Dendritic cell treated with granulocyte-macrophage colony-stimulating factor and Interleukin-4, amounts not matched to agents 40 ng/mL and 50 ng/mL, for 4 days (primary cell): ENCODE measurements at regions of chr12 and their contacts with region 1.

Region 1: GRCh38 chr12:68686595-68687521 is at the start of gene NUP107:
- H3K4me3 Mint-ChIP-seq: peak within 1 kb of the TSS; percentile 87
- H3K27ac Mint-ChIP-seq: peak within 1 kb of the TSS; percentile 88
- H3K4me1 Mint-ChIP-seq: peaks cover 9% of the 10 kb centered on the region
- H3K27me3 Mint-ChIP-seq: no peaks in the 10 kb centered on the region

Region 2: DNA sequence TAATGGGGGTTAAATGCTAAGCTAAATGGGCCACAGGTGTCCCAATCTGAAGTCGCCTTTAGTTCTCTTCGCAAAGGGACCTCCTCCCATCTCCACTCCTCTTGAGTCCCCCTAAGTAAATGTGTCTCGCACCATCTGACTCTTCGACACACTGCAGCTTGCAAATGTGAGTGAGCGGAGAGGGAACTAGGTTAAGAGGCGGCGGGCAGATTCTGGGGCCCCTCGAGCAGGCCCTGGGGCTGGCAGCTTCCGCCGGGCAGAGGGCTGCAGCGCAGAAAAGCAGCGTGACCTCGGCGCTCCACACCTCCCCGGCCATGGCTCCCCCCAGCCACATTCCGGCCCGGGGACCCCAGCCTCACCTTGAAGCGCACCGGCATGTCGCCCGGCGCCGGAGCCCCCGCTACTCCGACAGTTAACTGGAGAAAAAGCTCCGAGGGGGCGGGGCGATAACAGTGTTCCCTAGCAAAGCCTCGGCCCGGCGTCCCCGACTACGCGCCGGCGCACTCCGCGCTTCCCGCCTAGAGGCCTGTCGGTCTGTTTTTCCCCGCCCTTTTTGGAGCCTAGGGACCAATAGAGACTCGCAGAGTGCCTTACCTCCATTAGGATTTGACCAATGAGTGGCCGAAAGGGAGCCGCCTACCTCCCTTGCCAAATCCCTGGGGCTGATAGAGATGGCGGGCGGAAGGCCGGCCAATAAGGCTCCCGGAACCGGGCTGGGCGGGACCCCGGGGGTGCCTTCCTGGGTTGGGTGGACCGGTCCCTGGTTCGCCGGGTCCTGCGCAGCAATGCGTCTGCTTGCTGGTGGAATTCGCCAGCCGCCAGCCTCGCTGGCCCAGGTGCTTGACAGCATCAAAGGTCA is 354.8 kb before region 1 on chr12 and contains the start of gene MDM1:
- intact Hi-C with region 1: loop called (anchors 2 kb)
- H3K4me3 Mint-ChIP-seq: peak within 1 kb of the TSS; percentile 85
- H3K27ac Mint-ChIP-seq: peak within 1 kb of the TSS; percentile 85
- H3K4me1 Mint-ChIP-seq: peaks cover 41% of the 10 kb centered on the region
- H3K27me3 Mint-ChIP-seq: no peaks in the 10 kb centered on the region

Region 3: DNA sequence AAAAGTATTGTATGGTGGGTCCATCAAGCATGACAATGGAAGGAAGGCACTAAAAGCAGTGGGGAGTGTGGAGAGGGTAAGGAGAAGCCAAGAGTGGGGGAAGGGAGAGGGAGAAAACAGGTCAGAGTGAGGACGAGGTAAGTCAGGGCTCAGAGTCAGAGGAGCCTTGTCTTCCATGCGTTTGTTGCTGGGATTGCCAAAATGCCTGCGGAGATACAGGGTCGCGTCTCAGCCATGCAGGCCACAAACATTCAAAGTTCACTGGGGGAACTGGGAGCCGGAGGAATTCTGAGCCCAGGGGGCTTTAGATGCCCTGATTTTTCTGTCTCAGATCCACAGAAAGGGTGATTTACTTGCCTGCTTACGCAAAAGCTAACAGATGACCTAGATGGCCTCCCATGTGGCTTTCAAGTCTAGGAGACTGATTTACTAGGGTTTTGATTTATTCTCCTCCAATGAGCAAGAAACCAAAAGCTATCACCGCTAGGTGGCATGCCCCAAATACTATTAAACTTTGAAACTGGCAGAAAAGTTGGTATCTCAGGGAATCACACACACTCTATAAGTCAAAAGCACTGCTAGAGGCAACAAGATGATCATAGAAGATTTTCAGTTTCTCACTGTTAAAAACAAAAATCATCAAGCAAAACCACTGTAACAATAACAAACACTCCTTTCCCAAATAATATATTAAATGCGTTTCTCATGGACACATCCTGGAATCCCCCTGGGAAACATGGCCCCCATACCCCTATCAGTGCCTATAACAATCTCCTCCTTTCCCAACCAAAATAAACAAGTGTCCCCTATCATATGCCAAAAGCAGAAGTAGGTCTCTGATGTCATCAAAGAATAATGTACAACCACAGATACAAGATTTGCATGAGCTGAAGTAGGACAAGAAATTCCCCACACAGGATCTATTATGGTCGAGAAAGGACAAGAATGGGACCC is 328.0 kb before region 1 on chr12:
- intact Hi-C with region 1: loop called (anchors 2 kb)
- H3K4me3 Mint-ChIP-seq: no peak overlapping the region
- H3K27ac Mint-ChIP-seq: peak overlapping the region; percentile 60
- H3K4me1 Mint-ChIP-seq: peaks cover 38% of the 10 kb centered on the region
- H3K27me3 Mint-ChIP-seq: no peaks in the 10 kb centered on the region

Region 4: GRCh38 chr12:68739891-68740290 is 53.0 kb after region 1 on chr12:
- intact Hi-C with region 1: no loop called
- H3K4me3 Mint-ChIP-seq: no peak overlapping the region
- H3K27ac Mint-ChIP-seq: no peak overlapping the region
- H3K4me1 Mint-ChIP-seq: peaks cover 7% of the 10 kb centered on the region
- H3K27me3 Mint-ChIP-seq: no peaks in the 10 kb centered on the region

Region 5: GRCh38 chr12:68971351-68971772 is 284.5 kb after region 1 on chr12:
- intact Hi-C with region 1: no loop called
- H3K4me3 Mint-ChIP-seq: no peak overlapping the region
- H3K27ac Mint-ChIP-seq: no peak overlapping the region
- H3K4me1 Mint-ChIP-seq: peaks cover 18% of the 10 kb centered on the region
- H3K27me3 Mint-ChIP-seq: no peaks in the 10 kb centered on the region